CD4-positive, alpha-beta memory T cell (primary cell): ENCODE measurements at regions of chrX and their contacts with region 1.

Region 1: DNA sequence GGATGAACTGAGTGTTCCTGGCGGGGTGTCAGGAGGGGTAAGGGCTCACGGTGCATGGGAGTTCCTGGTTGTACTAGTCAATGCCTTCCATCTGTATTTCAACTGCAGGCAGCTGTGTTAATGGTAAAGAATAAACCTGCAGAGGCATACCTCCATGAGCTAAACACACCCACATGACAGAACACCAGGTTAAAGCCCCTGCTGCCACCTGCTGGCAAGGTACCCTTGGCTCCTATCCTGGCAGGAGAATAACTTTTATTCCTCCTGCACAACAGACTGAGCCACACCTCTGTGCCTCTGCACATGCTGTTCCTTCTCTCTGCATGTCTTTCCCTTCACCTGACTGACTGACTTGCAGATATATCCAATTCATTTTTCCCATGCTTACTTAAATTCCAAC is 11.1 kb downstream of the ITIH6 start:
- DNase-seq: peak in 4 of 5 donors; percentile 23 to 41 (median 36)
- H3K4me3 ChIP-seq: no peak overlapping the region
- H3K4me3 Mint-ChIP-seq: no peak overlapping the region
- H3K27ac ChIP-seq: no peak overlapping the region
- H3K27ac Mint-ChIP-seq: no peak overlapping the region
- H3K4me1 ChIP-seq: no peaks in the 10 kb centered on the region
- H3K4me1 Mint-ChIP-seq: no peaks in the 10 kb centered on the region
- H3K27me3 ChIP-seq: no peaks in the 10 kb centered on the region
- H3K27me3 Mint-ChIP-seq: peaks cover 0 to 3% of the 10 kb centered on the region in 2 donors

Region 2: GRCh38 chrX:54248309-54248708 is 538.7 kb before region 1 on chrX:
- CTCF ChIA-PET with region 1: interaction called, 4 read pairs
- POLR2A ChIA-PET with region 1: no interaction called
- intact Hi-C with region 1: loop called (anchors 5 kb)
- DNase-seq: peak in 4 of 5 donors; percentile 1 to 11 (median 6)
- H3K4me3 ChIP-seq: no peak overlapping the region
- H3K4me3 Mint-ChIP-seq: no peak overlapping the region
- H3K27ac ChIP-seq: no peak overlapping the region
- H3K27ac Mint-ChIP-seq: no peak overlapping the region
- H3K4me1 ChIP-seq: no peaks in the 10 kb centered on the region
- H3K4me1 Mint-ChIP-seq: no peaks in the 10 kb centered on the region
- H3K27me3 ChIP-seq: no peaks in the 10 kb centered on the region
- H3K27me3 Mint-ChIP-seq: peaks cover 0 to 1% of the 10 kb centered on the region in 2 donors

Region 3: DNA sequence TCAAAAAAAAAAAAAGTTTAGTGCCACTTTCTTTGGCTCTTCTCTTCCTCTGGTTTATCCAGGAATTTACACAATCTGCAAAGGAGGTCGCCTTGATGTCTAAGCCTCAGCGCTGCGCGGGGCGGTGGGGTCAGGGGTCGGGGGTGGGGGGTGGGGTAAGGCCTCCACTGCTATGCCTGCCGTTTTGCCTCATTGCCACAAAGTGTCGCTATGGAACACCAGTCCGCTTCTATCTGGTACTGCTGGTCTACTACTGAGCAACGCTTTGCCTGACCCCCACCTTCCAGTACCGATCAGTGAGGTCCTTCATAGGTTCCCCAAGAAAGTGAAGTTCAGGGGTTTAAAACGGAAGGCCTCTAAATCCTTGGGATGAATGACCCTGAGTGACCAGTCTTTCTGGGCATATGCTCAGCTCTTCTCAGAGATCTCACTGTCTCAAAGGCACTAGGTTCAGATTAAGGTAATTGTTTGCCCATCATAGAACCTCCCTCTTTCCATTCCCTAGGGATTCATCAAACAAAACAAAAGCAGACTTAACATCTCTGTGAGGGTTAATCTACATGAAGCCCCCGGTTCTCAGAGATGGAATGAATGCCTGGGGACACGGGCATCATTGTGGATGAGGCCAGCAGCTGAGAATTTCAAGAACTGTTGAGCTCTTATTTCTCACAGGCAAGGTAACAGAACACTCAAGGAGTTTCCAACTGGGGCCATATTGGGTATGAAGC is 363.6 kb before region 1 on chrX:
- CTCF ChIA-PET with region 1: no interaction called
- POLR2A ChIA-PET with region 1: no interaction called
- intact Hi-C with region 1: loop called (anchors 2 kb)
- DNase-seq: no peak
- H3K4me3 ChIP-seq: no peak overlapping the region
- H3K4me3 Mint-ChIP-seq: no peak overlapping the region
- H3K27ac ChIP-seq: no peak overlapping the region
- H3K27ac Mint-ChIP-seq: no peak overlapping the region
- H3K4me1 ChIP-seq: no peaks in the 10 kb centered on the region
- H3K4me1 Mint-ChIP-seq: no peaks in the 10 kb centered on the region
- H3K27me3 ChIP-seq: no peaks in the 10 kb centered on the region
- H3K27me3 Mint-ChIP-seq: peaks cover 3 to 6% of the 10 kb centered on the region in 2 donors

Region 4: DNA sequence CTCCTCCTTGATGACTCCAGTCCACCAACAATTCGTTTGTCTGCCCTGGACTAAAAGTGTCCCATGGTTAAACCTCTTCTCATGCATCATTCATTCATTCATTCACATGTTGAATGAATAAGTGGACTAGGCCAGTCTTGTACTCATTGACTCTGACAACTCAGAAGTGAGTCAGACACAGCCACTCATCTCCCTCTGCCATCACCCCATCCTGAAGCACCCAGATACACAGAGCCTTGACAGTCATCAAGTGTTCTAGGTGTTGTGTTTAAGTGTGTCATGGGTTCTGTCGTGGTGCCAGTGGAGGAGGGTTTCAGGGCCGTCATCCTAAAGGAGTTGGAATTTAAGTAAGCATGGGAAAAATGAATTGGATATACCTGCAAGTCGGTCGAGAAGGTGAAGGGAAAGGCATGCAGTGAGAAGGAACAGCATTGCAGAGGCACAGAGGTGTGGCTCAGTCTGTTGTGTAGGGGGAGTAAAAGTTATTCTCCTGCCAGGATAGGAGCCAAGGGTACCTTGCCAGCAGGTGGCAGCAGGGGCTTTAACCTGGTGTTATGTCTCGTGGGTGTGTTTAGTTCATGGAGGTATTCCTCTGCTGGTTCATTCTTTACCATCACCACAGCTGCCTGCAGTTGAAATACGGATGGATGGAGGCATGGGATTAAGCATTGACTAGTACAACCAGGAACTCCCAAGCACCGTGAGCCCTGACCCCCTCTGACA is 38.9 kb after region 1 on chrX:
- CTCF ChIA-PET with region 1: no interaction called
- POLR2A ChIA-PET with region 1: no interaction called
- intact Hi-C with region 1: no loop called
- DNase-seq: peak in 4 of 5 donors; percentile 5 to 25 (median 21)
- H3K4me3 ChIP-seq: no peak overlapping the region
- H3K4me3 Mint-ChIP-seq: no peak overlapping the region
- H3K27ac ChIP-seq: no peak overlapping the region
- H3K27ac Mint-ChIP-seq: no peak overlapping the region
- H3K4me1 ChIP-seq: no peaks in the 10 kb centered on the region
- H3K4me1 Mint-ChIP-seq: no peaks in the 10 kb centered on the region
- H3K27me3 ChIP-seq: no peaks in the 10 kb centered on the region
- H3K27me3 Mint-ChIP-seq: no peaks in the 10 kb centered on the region

Region 5: GRCh38 chrX:55088795-55089489 is 302.0 kb after region 1 on chrX and contains the start of gene PAGE2:
- CTCF ChIA-PET with region 1: no interaction called
- POLR2A ChIA-PET with region 1: no interaction called
- intact Hi-C with region 1: no loop called
- DNase-seq: no peak
- H3K4me3 ChIP-seq: no peak within 1 kb of the TSS
- H3K4me3 Mint-ChIP-seq: no peak within 1 kb of the TSS
- H3K27ac ChIP-seq: no peak within 1 kb of the TSS
- H3K27ac Mint-ChIP-seq: peak within 1 kb of the TSS in 1 of 7 donors; percentile 13
- H3K4me1 ChIP-seq: no peaks in the 10 kb centered on the region
- H3K4me1 Mint-ChIP-seq: no peaks in the 10 kb centered on the region
- H3K27me3 ChIP-seq: no peaks in the 10 kb centered on the region
- H3K27me3 Mint-ChIP-seq: no peaks in the 10 kb centered on the region
- total RNA-seq, gene PAGE2: not detected

Region 6: GRCh38 chrX:55546956-55547355 is 760.0 kb after region 1 on chrX:
- CTCF ChIA-PET with region 1: no interaction called
- POLR2A ChIA-PET with region 1: no interaction called
- intact Hi-C with region 1: no loop called
- DNase-seq: no peak
- H3K4me3 ChIP-seq: no peak overlapping the region
- H3K4me3 Mint-ChIP-seq: no peak overlapping the region
- H3K27ac ChIP-seq: no peak overlapping the region
- H3K27ac Mint-ChIP-seq: no peak overlapping the region
- H3K4me1 ChIP-seq: no peaks in the 10 kb centered on the region
- H3K4me1 Mint-ChIP-seq: no peaks in the 10 kb centered on the region
- H3K27me3 ChIP-seq: no peaks in the 10 kb centered on the region
- H3K27me3 Mint-ChIP-seq: peaks cover 3 to 6% of the 10 kb centered on the region in 2 donors